ENCODE measurements at regions of chr2 and their contacts with region 1.

Region 1: DNA sequence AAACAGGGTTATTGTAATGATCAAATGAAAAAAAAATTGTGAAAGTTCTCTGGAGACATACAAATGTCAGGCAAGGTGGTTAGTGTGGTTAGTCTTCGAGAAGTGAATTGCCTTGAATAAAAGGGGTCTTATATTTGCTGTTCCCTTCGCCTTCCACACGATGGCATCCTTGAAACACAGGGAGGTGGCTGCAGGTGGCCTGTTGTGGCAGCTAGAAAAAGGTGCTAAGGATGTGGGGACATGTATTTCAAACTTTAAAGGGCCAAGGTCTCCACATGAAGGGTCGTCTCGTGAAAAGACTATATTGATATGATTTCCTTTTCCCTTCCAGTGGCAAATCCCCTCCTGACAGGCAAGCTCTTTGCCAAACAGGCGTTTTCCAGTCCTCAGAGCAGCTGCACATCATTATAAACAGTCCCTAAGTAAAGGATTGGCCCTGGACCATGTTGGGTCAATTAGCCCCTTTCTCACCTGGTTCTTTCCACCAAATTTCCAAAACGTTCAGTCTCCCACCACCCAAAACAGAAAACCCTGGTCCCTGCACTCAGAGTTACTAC is 68.5 kb downstream of the COPS8 start:
- DNase-seq: peak; percentile 79
- H3K4me3 ChIP-seq: no peak overlapping the region
- H3K27ac ChIP-seq: no peak overlapping the region
- H3K4me1 ChIP-seq: peaks cover 40% of the 10 kb centered on the region
- CTCF ChIP-seq: peak; percentile 89

Region 2: GRCh38 chr2:236852100-236852978 is 301.8 kb before region 1 on chr2:
- CTCF ChIA-PET with region 1: no interaction called
- POLR2A ChIA-PET with region 1: no interaction called
- intact Hi-C with region 1: no loop called
- DNase-seq: no peak
- H3K4me3 ChIP-seq: no peak overlapping the region
- H3K27ac ChIP-seq: no peak overlapping the region
- H3K4me1 ChIP-seq: no peaks in the 10 kb centered on the region
- CTCF ChIP-seq: no peak

Region 3: GRCh38 chr2:237322564-237322963 is 168.4 kb after region 1 on chr2:
- CTCF ChIA-PET with region 1: no interaction called
- POLR2A ChIA-PET with region 1: no interaction called
- intact Hi-C with region 1: loop called (anchors 1 kb)
- DNase-seq: peak; percentile 21
- H3K4me3 ChIP-seq: no peak overlapping the region
- H3K27ac ChIP-seq: no peak overlapping the region
- H3K4me1 ChIP-seq: no peaks in the 10 kb centered on the region
- CTCF ChIP-seq: peak; percentile 53; the same call in 1 of the 2 replicates

Region 4: GRCh38 chr2:237474931-237475703 is 321.0 kb after region 1 on chr2:
- CTCF ChIA-PET with region 1: interaction called, 4 read pairs
- POLR2A ChIA-PET with region 1: no interaction called
- intact Hi-C with region 1: loop called (anchors 1 kb)
- DNase-seq: peak; percentile 81
- H3K4me3 ChIP-seq: peak overlapping the region; percentile 93
- H3K27ac ChIP-seq: no peak overlapping the region
- H3K4me1 ChIP-seq: peaks cover 10% of the 10 kb centered on the region
- CTCF ChIP-seq: peak; percentile 86

Region 5: GRCh38 chr2:237572021-237572741 is 418.0 kb after region 1 on chr2:
- CTCF ChIA-PET with region 1: interaction called, 5 read pairs
- POLR2A ChIA-PET with region 1: no interaction called
- intact Hi-C with region 1: loop called (anchors 1 kb)
- DNase-seq: peak; percentile 91
- H3K4me3 ChIP-seq: no peak overlapping the region
- H3K27ac ChIP-seq: no peak overlapping the region
- H3K4me1 ChIP-seq: no peaks in the 10 kb centered on the region
- CTCF ChIP-seq: peak; percentile 99

Region 6: DNA sequence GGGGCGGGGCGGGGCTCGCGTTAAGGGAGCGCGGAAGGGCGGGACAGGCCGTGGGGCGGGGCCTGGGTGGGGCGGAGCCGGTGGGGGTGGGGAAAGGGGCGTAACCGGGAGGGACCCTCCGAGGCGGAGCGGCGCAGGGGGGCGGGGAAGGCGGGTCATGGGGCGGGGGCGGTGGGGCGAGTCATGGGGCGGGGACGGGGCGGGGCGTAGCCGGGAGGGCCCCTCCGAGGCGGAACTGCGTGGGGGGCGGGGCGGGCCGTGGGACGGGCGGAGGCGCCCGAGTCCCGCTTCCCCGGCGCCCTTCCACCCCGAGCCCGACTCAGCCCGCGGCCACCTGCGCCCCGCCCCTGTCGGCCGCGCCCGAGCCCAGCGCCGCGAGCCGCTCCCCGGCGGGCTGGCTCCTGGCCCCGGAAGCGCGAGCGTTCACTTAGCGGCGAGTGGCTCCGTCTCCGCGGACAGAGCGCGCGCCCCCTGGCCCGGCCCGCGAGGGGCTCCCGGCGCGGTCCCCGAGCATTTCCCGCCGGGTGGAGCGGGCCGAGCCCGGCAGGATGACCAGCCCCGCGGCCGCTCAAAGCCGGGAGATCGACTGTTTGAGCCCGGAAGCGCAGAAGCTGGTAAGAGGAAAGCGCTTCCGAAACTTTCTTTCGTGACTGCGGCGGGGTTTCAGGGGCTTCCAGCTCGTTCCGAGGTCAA is 537.9 kb after region 1 on chr2:
- CTCF ChIA-PET with region 1: no interaction called
- POLR2A ChIA-PET with region 1: no interaction called
- intact Hi-C with region 1: loop called (anchors 5 kb)
- DNase-seq: peak; percentile 92
- H3K4me3 ChIP-seq: peak overlapping the region; percentile 91
- H3K27ac ChIP-seq: peak overlapping the region; percentile 99
- H3K4me1 ChIP-seq: peaks cover 49% of the 10 kb centered on the region
- CTCF ChIP-seq: no peak

Measured in OCI-LY7 (cell line).